Common myeloid progenitor, CD34-positive (primary cell): ENCODE measurements at regions of chr1 and their contacts with region 1.

Region 1: DNA sequence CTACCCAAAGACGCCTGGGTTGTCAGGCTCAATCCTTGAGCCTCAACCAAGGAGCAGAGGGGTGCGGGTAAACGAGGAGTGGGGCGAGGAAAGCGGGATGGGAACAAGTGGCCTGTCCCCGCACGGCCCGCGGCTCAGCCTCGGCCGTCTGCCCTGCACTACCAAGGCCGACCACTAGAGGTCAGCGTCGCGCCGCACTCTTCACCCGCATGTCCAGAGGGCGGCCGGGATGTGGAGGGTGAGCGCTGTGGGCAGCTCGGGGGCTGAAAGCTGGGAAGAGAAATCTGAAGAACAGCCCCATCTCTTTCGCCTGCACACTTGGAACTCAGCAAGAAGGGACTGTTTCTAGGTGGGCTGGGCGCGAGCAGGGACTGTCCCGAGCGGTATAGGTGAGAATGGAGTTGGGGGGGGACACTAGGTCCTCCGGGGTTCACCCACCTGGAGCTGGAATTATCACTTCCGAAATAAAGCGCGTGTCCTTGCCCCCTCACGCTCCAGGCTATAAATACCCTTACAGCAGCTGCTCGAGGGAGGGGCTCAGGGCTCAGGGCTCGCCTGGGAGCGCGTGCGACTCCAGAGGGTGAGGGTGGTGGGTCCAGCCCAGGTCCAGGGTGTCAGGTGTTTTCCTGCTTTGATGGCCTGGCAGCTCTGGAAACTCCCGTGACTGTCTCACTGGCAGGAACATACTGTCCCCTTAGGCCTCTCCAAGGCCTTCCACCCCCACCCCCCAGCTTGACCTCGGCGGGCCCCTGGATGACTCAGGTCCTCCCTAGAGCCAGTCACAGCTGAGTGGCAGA is 9.8 kb downstream of the SLC30A2 start:
- DNase-seq: peak; percentile 57 to 65 (median 61)
- H3K4me3 ChIP-seq: peak overlapping the region; percentile 49 to 93 (median 75)
- H3K27ac ChIP-seq: peak overlapping the region; percentile 40 to 84
- H3K4me1 ChIP-seq: peaks cover 0 to 20% (median 14%) of the 10 kb centered on the region in 4 experiments
- H3K27me3 ChIP-seq: peaks cover 0 to 15% (median 8%) of the 10 kb centered on the region in 5 experiments

Region 2: GRCh38 chr1:25829046-25829445 is 207.1 kb before region 1 on chr1:
- CTCF ChIA-PET with region 1: no interaction called
- POLR2A ChIA-PET with region 1: no interaction called
- DNase-seq: no peak
- H3K4me3 ChIP-seq: no peak overlapping the region
- H3K27ac ChIP-seq: no peak overlapping the region
- H3K4me1 ChIP-seq: peaks cover 15 to 32% (median 21%) of the 10 kb centered on the region in 4 experiments
- H3K27me3 ChIP-seq: no peaks in the 10 kb centered on the region

Region 3: GRCh38 chr1:25927521-25928265 is 108.5 kb before region 1 on chr1:
- CTCF ChIA-PET with region 1: no interaction called
- POLR2A ChIA-PET with region 1: no interaction called
- DNase-seq: peak; percentile 29 to 90 (median 89)
- H3K4me3 ChIP-seq: no peak overlapping the region
- H3K27ac ChIP-seq: no peak overlapping the region
- H3K4me1 ChIP-seq: peaks cover 6 to 38% (median 25%) of the 10 kb centered on the region in 4 experiments
- H3K27me3 ChIP-seq: no peaks in the 10 kb centered on the region

Region 4: GRCh38 chr1:26014179-26014578 is 22.0 kb before region 1 on chr1:
- CTCF ChIA-PET with region 1: no interaction called
- POLR2A ChIA-PET with region 1: no interaction called
- DNase-seq: no peak
- H3K4me3 ChIP-seq: no peak overlapping the region
- H3K27ac ChIP-seq: no peak overlapping the region
- H3K4me1 ChIP-seq: peaks cover 0 to 35% (median 14%) of the 10 kb centered on the region in 4 experiments
- H3K27me3 ChIP-seq: peaks cover 0 to 1% (median 0%) of the 10 kb centered on the region in 5 experiments

Region 5: DNA sequence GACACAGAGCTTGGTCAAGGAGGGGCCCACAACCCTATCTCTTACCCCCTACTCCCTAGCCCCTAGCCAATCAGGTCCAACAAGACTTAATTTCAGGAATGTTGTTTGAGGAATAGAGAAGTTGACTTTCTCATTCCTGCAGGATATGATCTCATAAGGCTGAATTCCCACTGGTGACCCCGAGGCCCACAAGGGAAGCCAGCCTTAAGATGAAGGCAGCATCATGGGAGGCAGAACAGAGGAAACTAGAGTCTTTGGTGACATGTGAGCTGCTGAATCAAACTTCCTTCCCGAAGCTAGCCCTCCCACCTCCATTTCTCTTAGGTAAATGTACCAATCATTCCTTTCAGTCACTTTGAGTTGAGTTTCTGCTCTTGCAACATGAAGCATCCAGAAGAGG is 66.4 kb after region 1 on chr1:
- CTCF ChIA-PET with region 1: interaction called, 16 read pairs
- POLR2A ChIA-PET with region 1: no interaction called
- DNase-seq: no peak
- H3K4me3 ChIP-seq: no peak overlapping the region
- H3K27ac ChIP-seq: no peak overlapping the region
- H3K4me1 ChIP-seq: peaks cover 0 to 6% (median 0%) of the 10 kb centered on the region in 4 experiments
- H3K27me3 ChIP-seq: peaks cover 0 to 5% (median 3%) of the 10 kb centered on the region in 5 experiments